ENCODE measurements at regions of chr12 and their contacts with region 1.

Region 1: DNA sequence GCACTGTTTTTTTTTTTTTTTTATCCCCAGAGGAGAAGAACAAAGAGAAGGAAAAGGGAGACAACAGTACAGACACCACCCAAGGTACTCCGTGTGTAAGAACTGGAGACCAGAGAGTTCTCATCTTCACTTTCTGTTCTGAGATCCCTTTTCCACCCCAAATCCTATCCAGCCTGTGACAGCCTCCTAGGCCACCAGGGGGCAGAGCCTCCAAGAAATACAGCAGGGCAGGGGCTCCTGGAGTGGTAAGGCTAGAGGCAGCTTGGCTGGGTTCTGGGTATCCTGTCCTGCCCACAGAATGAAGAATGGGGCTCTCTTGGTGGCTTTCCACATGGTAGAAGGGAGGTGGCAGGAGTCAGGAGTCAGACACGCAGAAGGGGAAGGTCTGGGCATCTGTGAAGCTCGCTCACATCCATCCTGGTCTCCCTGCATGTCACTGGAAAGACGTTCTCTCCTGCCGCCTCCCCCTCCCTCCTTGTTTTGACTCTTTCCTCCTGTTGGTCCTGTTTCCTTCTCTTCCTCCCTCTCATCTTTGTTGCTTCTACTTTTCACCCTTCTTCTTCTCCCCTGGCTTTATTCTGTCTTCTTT is 12.0 kb downstream of the CLSTN3 start:
- DNase-seq: no peak
- H3K4me3 ChIP-seq: no peak overlapping the region
- H3K27ac ChIP-seq: no peak overlapping the region
- H3K27me3 ChIP-seq: no peaks in the 10 kb centered on the region
- CTCF ChIP-seq: peak; percentile 77

Region 2: GRCh38 chr12:6927379-6928024 is 214.6 kb before region 1 on chr12 and contains the start of gene ATN1:
- CTCF ChIA-PET with region 1: interaction called, 16 read pairs
- POLR2A ChIA-PET with region 1: no interaction called
- DNase-seq: peak; percentile 47
- H3K4me3 ChIP-seq: peak within 1 kb of the TSS; percentile 68
- H3K27ac ChIP-seq: peak within 1 kb of the TSS; percentile 90
- H3K27me3 ChIP-seq: no peaks in the 10 kb centered on the region
- CTCF ChIP-seq: no peak
- polyA plus RNA-seq, gene ATN1: 11.2 and 21.4 TPM in 2 replicates

Region 3: GRCh38 chr12:6987948-6988553 is 154.1 kb before region 1 on chr12:
- CTCF ChIA-PET with region 1: no interaction called
- POLR2A ChIA-PET with region 1: no interaction called
- DNase-seq: no peak
- H3K4me3 ChIP-seq: no peak overlapping the region
- H3K27ac ChIP-seq: no peak overlapping the region
- H3K27me3 ChIP-seq: no peaks in the 10 kb centered on the region
- CTCF ChIP-seq: no peak

Region 4: GRCh38 chr12:7093892-7094291 is 48.3 kb before region 1 on chr12:
- CTCF ChIA-PET with region 1: no interaction called
- POLR2A ChIA-PET with region 1: no interaction called
- DNase-seq: no peak
- H3K4me3 ChIP-seq: no peak overlapping the region
- H3K27ac ChIP-seq: no peak overlapping the region
- H3K27me3 ChIP-seq: no peaks in the 10 kb centered on the region
- CTCF ChIP-seq: no peak

Region 5: DNA sequence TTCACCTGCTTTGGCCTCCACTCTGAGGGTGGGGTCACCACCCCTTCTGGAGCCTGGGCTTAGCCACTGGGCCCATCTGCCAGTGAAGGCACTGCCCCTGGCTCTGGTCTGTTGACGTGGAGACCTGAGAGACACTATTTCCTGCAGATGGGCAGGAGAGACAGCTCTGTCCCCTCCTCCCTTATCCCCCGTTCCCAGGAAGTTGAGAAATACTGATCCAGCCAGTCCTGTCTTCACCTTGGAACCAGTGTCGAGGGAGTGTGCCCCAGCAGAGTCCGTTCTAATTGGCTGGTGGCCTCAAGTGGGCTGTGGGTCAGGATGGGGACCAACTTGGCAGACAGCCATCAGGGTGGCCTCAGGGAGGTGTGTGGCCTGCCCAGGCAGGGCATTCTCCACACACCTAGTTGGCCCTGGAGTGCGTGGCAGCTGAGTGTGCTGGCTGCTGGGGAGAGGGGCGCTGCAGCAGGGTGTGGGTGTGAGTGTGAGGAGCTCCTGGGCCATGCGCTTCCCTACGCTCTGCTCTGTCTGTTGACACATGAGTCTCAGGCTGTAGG is 13.4 kb after region 1 on chr12:
- CTCF ChIA-PET with region 1: interaction called, 45 read pairs
- POLR2A ChIA-PET with region 1: no interaction called
- DNase-seq: no peak
- H3K4me3 ChIP-seq: no peak overlapping the region
- H3K27ac ChIP-seq: no peak overlapping the region
- H3K27me3 ChIP-seq: no peaks in the 10 kb centered on the region
- CTCF ChIP-seq: no peak

Region 6: GRCh38 chr12:7175493-7175892 is 33.3 kb after region 1 on chr12:
- CTCF ChIA-PET with region 1: interaction called, 18 read pairs
- POLR2A ChIA-PET with region 1: no interaction called
- DNase-seq: no peak
- H3K4me3 ChIP-seq: no peak overlapping the region
- H3K27ac ChIP-seq: no peak overlapping the region
- H3K27me3 ChIP-seq: no peaks in the 10 kb centered on the region
- CTCF ChIP-seq: no peak

Region 7: DNA sequence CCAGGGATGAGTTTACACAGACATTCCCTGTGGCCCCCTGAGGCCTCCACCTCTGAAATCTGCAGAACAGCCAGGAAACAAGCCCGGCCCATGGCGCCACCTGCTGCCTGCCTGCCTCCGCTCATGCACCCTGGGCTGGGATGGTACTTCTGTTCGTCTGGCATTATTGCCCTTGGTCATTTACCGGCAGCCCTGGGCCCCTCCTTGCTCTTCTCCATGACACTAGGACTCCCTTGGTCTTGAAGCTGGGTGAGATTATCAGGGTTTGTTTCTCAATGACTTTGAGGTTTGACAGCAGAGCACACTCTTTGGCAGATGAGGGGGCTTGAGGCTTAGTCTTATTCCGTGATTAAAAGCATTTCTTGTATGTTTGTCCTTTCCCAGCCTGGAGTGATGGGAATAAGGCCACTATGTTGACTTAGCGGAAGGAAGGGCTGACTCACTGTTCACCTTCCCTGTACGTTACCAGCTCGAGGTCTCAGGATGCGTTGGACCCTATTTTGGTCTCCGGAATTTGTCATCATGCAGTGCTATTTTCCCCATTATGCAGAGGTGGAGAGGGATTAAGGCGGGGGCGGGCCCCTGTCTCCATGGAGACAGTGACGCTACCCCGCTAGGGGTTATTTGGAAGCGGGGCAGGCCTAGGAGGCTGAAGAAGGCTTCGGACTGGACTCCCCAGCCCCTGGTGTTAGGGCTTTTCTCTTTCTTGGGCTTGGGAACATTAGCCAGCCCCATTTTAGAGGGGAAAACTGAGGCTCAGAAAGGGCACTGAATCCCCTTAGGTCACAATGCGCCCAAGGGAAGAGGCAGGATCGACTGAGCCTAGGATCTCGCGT is 46.6 kb after region 1 on chr12:
- CTCF ChIA-PET with region 1: interaction called, 22 read pairs
- POLR2A ChIA-PET with region 1: interaction called, 3 read pairs
- DNase-seq: peak; percentile 11
- H3K4me3 ChIP-seq: peak overlapping the region; percentile 93
- H3K27ac ChIP-seq: peak overlapping the region; percentile 74
- H3K27me3 ChIP-seq: no peaks in the 10 kb centered on the region
- CTCF ChIP-seq: peak; percentile 80

Measured in AG04450 (cell line).